Ovary (tissue), 10 donors: ENCODE measurements at regions of chr20 and their contacts with region 1.

Region 1: GRCh38 chr20:58650776-58651558 is at the start of gene STX16:
- DNase-seq: peak; percentile 85 to 92 (median 89)
- H3K4me3 ChIP-seq: peak within 1 kb of the TSS; percentile 83
- H3K27ac ChIP-seq: peak within 1 kb of the TSS; percentile 75 to 85
- H3K4me1 ChIP-seq: peaks cover 8% of the 10 kb centered on the region
- H3K27me3 ChIP-seq: no peaks in the 10 kb centered on the region
- CTCF ChIP-seq: peak; percentile 67 to 72 (median 67)
- EP300 ChIP-seq: no peak
- POLR2A ChIP-seq: peak; percentile 52
- total RNA-seq, gene STX16: 31.9 to 55.8 (median 46.5) TPM

Region 2: GRCh38 chr20:58236612-58237330 is 414.2 kb before region 1 on chr20:
- intact Hi-C with region 1: loop called in 3 of 4 experiments (anchors 5 kb)
- DNase-seq: peak; percentile 54 to 84 (median 76)
- H3K4me3 ChIP-seq: peak overlapping the region; percentile 8
- H3K27ac ChIP-seq: no peak overlapping the region
- H3K4me1 ChIP-seq: no peaks in the 10 kb centered on the region
- H3K27me3 ChIP-seq: no peaks in the 10 kb centered on the region
- CTCF ChIP-seq: peak; percentile 77 to 87 (median 84)
- EP300 ChIP-seq: no peak
- POLR2A ChIP-seq: peak; percentile 10

Region 3: DNA sequence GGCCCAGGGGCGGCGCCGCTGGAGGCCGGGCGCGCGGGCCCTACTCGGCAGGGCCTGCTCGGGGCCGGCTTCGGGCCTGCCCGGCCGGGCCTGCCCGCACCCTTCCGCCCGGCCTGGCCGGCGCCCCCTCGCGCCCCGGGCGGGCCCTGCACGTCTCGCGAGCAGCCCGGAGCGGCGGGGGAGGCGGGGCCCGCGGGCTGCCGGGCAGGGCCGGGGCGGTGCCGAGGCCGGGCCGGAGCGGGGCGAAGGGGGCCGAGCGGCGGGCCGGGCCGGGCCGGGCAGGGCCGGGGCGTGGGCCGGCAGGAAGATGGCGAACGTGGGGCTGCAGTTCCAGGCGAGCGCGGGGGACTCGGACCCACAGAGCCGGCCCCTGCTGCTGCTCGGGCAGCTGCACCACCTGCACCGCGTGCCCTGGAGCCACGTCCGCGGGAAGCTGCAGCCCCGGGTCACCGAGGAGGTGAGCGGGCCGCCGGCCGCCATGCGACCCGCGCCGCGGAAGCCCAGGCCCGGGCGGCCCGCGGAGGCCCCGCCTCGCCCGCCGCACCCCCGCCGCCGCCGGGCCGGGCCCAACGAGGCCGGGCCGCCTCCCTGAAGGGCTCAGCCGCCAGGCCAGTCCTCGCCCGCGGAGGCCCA is 41.7 kb after region 1 on chr20 and contains the start of gene NPEPL1:
- intact Hi-C with region 1: loop called in 1 of 4 experiments (anchors 5 kb)
- DNase-seq: peak; percentile 61 to 79 (median 72)
- H3K4me3 ChIP-seq: peak within 1 kb of the TSS; percentile 49
- H3K27ac ChIP-seq: peak within 1 kb of the TSS; percentile 88 to 93
- H3K4me1 ChIP-seq: peaks cover 19% of the 10 kb centered on the region
- H3K27me3 ChIP-seq: no peaks in the 10 kb centered on the region
- CTCF ChIP-seq: no peak
- EP300 ChIP-seq: no peak
- POLR2A ChIP-seq: no peak
- total RNA-seq, gene NPEPL1: 17.8 to 41.0 (median 33.9) TPM

Region 4: DNA sequence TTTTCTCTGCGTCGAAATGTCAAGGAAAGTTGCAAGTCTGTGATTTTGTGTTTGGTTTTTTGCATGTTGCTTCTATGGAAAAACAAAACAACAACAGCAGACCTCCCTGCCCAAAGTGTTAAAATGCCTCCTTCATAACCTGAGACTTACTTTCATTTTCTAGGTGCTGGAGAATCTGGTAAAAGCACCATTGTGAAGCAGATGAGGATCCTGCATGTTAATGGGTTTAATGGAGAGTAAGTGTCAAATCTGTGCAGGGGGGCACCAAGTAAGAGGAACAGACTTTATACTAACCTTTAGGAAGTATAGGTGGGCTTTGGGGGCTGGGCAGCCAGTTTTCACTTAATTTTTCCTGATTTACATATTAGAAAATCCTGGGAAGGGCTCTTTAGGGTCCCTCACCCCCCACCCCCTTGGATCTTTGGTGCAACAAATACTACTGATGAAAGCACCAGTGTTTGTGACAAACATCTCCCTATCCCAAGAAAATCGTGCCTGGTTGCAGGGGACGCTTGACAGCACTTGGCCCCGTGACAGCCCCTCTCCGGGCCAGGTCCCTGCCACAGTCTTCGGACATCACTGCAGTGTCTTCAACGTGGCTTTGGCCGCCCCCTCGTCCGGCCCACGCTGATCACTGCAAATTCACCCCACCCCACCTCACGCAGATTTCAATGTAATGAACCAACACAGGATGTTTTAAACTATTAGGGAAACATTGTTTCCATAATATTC is 244.6 kb after region 1 on chr20:
- intact Hi-C with region 1: loop called in 1 of 4 experiments (anchors 5 kb)
- DNase-seq: no peak
- H3K4me3 ChIP-seq: no peak overlapping the region
- H3K27ac ChIP-seq: no peak overlapping the region
- H3K4me1 ChIP-seq: peaks cover 11% of the 10 kb centered on the region
- H3K27me3 ChIP-seq: no peaks in the 10 kb centered on the region
- CTCF ChIP-seq: no peak
- EP300 ChIP-seq: no peak
- POLR2A ChIP-seq: no peak